CD8-positive, alpha-beta T cell (primary cell): ENCODE measurements at regions of chr6 and their contacts with region 1.

Region 1: GRCh38 chr6:133923938-133924593 is 29.0 kb upstream of the TBPL1 start:
- DNase-seq: peak; percentile 8 to 82 (median 53)
- ATAC-seq: peak; percentile 80
- H3K4me3 ChIP-seq: no peak overlapping the region
- H3K4me3 Mint-ChIP-seq: no peak overlapping the region
- H3K27ac ChIP-seq: no peak overlapping the region
- H3K27ac Mint-ChIP-seq: no peak overlapping the region
- H3K4me1 ChIP-seq: no peaks in the 10 kb centered on the region
- H3K4me1 Mint-ChIP-seq: no peaks in the 10 kb centered on the region
- H3K27me3 ChIP-seq: no peaks in the 10 kb centered on the region
- H3K27me3 Mint-ChIP-seq: peaks cover 22% of the 10 kb centered on the region
- CTCF ChIP-seq: peak; percentile 91

Region 2: DNA sequence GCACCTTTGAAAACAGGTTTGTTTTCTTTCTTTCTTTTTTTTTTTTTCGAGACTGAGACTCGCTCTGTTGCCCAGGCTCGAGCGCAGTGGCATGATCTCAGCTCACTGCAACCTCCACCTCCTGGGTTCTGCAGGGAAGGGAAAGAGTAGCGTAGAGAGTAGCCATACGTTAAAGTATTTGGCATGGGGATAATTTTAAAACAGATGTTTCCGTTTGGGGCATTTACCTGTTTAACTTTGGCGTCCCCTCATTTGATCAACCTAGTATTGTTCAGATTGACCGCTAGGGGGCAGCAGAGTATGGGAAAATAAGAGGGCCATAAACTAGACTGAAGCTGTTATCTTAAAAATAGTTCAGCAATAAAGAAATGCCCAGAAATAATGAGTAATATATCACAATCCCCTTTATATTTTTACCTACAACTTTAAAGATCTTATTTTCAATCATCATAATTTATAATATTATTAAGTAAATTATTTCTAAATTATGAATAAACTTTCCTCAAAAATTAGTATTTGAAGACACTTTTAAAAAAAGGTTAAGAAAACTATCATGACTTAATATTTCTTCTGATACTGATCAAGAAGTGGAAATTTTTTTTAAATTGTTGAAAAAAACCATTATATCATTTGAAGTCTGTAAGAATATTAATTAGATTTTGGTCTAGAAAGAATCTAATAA is 1393.6 kb before region 1 on chr6:
- CTCF ChIA-PET with region 1: no interaction called
- POLR2A ChIA-PET with region 1: no interaction called
- intact Hi-C with region 1: loop called in 1 of 2 experiments (anchors 5 kb)
- DNase-seq: peak; percentile 18 to 81 (median 76)
- ATAC-seq: peak; percentile 74
- H3K4me3 ChIP-seq: no peak overlapping the region
- H3K4me3 Mint-ChIP-seq: no peak overlapping the region
- H3K27ac ChIP-seq: no peak overlapping the region
- H3K27ac Mint-ChIP-seq: no peak overlapping the region
- H3K4me1 ChIP-seq: no peaks in the 10 kb centered on the region
- H3K4me1 Mint-ChIP-seq: peaks cover 3% of the 10 kb centered on the region
- H3K27me3 ChIP-seq: no peaks in the 10 kb centered on the region
- H3K27me3 Mint-ChIP-seq: peaks cover 19% of the 10 kb centered on the region
- CTCF ChIP-seq: peak; percentile 76

Region 3: GRCh38 chr6:133952815-133953633 is 29.0 kb after region 1 on chr6 and contains the start of gene TBPL1:
- CTCF ChIA-PET with region 1: interaction called, 16 read pairs
- POLR2A ChIA-PET with region 1: interaction called, 3 read pairs
- intact Hi-C with region 1: loop called in 1 of 2 experiments (anchors 1 kb)
- DNase-seq: peak; percentile 85 to 97 (median 92)
- ATAC-seq: peak; percentile 85
- H3K4me3 ChIP-seq: peak within 1 kb of the TSS; percentile 73 to 82
- H3K4me3 Mint-ChIP-seq: peak within 1 kb of the TSS; percentile 94
- H3K27ac ChIP-seq: peak within 1 kb of the TSS; percentile 55 to 90
- H3K27ac Mint-ChIP-seq: peak within 1 kb of the TSS; percentile 96
- H3K4me1 ChIP-seq: peaks cover 20% of the 10 kb centered on the region
- H3K4me1 Mint-ChIP-seq: peaks cover 50% of the 10 kb centered on the region
- H3K27me3 ChIP-seq: no peaks in the 10 kb centered on the region
- H3K27me3 Mint-ChIP-seq: no peaks in the 10 kb centered on the region
- CTCF ChIP-seq: no peak
- total RNA-seq, gene TBPL1: 47.8 to 48.7 TPM

Region 4: DNA sequence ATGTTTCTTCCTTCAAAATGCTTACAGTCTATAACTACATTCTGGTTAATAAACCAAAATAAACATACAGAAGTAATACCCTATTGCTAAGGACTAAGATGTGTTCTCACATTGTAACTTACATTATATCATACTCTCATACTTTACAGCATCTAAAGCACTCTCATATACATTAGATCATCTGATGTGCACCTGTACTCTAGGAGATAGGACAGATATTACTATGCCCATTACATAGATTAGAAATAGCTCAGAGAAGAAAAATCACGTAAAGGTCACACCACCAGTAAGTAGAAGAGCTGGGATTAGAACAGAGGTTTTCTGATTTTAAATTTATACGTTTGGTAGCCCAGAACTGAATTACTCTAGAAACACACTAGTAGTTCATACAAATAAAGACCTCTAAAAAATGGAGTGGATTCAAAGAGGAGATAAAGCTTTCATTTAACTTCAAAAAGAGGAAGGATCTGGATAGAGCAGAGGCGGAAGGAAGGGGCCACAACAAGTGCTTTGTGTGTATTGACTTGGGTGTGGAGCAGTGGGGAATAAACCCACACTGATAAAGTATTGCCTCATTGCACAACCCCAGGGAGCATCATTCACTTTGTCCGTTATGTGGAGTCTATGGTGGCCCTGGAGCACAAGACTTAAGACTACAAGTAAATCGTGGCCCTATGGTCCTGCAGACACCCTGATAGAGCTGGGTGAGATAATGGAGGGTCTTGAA is 97.5 kb after region 1 on chr6:
- CTCF ChIA-PET with region 1: interaction called, 19 read pairs
- POLR2A ChIA-PET with region 1: no interaction called
- intact Hi-C with region 1: no loop called
- DNase-seq: no peak
- ATAC-seq: no peak
- H3K4me3 ChIP-seq: no peak overlapping the region
- H3K4me3 Mint-ChIP-seq: no peak overlapping the region
- H3K27ac ChIP-seq: no peak overlapping the region
- H3K27ac Mint-ChIP-seq: no peak overlapping the region
- H3K4me1 ChIP-seq: no peaks in the 10 kb centered on the region
- H3K4me1 Mint-ChIP-seq: no peaks in the 10 kb centered on the region
- H3K27me3 ChIP-seq: no peaks in the 10 kb centered on the region
- H3K27me3 Mint-ChIP-seq: peaks cover 2% of the 10 kb centered on the region
- CTCF ChIP-seq: no peak

Region 5: GRCh38 chr6:134080171-134080795 is 156.2 kb after region 1 on chr6:
- CTCF ChIA-PET with region 1: interaction called, 17 read pairs
- POLR2A ChIA-PET with region 1: no interaction called
- intact Hi-C with region 1: no loop called
- DNase-seq: no peak
- ATAC-seq: no peak
- H3K4me3 ChIP-seq: no peak overlapping the region
- H3K4me3 Mint-ChIP-seq: no peak overlapping the region
- H3K27ac ChIP-seq: no peak overlapping the region
- H3K27ac Mint-ChIP-seq: no peak overlapping the region
- H3K4me1 ChIP-seq: no peaks in the 10 kb centered on the region
- H3K4me1 Mint-ChIP-seq: peaks cover 13% of the 10 kb centered on the region
- H3K27me3 ChIP-seq: no peaks in the 10 kb centered on the region
- H3K27me3 Mint-ChIP-seq: peaks cover 2% of the 10 kb centered on the region
- CTCF ChIP-seq: no peak

Region 6: GRCh38 chr6:134949927-134950326 is 1025.9 kb after region 1 on chr6 and contains the start of gene ALDH8A1:
- CTCF ChIA-PET with region 1: interaction called, 3 read pairs
- POLR2A ChIA-PET with region 1: no interaction called
- intact Hi-C with region 1: loop called (anchors 10 kb)
- DNase-seq: no peak
- ATAC-seq: no peak
- H3K4me3 ChIP-seq: no peak within 1 kb of the TSS
- H3K4me3 Mint-ChIP-seq: no peak within 1 kb of the TSS
- H3K27ac ChIP-seq: no peak within 1 kb of the TSS
- H3K27ac Mint-ChIP-seq: no peak within 1 kb of the TSS
- H3K4me1 ChIP-seq: no peaks in the 10 kb centered on the region
- H3K4me1 Mint-ChIP-seq: no peaks in the 10 kb centered on the region
- H3K27me3 ChIP-seq: no peaks in the 10 kb centered on the region
- H3K27me3 Mint-ChIP-seq: no peaks in the 10 kb centered on the region
- CTCF ChIP-seq: no peak
- total RNA-seq, gene ALDH8A1: 0.43 to 2.4 TPM